ENCODE measurements at regions of chr19 and their contacts with region 1.

Region 1: GRCh38 chr19:18058208-18059030 is 28.3 kb downstream of the IL12RB1 start:
- DNase-seq: peak; percentile 83
- ATAC-seq: peak; percentile 91 to 93

Region 2: GRCh38 chr19:17947815-17948513 is 110.5 kb before region 1 on chr19:
- intact Hi-C with region 1: loop called in 1 of 2 experiments (anchors 10 kb)
- DNase-seq: peak; percentile 93
- ATAC-seq: peak; percentile 87 to 94

Region 3: GRCh38 chr19:18007044-18007916 is 51.1 kb before region 1 on chr19:
- intact Hi-C with region 1: loop called (anchors 1 to 2 kb)
- DNase-seq: peak; percentile 87
- ATAC-seq: peak; percentile 86 to 87

Measured in left cardiac atrium (tissue), 4 donors.